H1 (cell line): ENCODE measurements at regions of chr14 and their contacts with region 1.

Region 1: GRCh38 chr14:39034481-39035296 is 68.3 kb downstream of the SEC23A start:
- DNase-seq: no peak
- H3K4me3 ChIP-seq: no peak overlapping the region
- H3K27ac ChIP-seq: no peak overlapping the region
- H3K4me1 ChIP-seq: no peaks in the 10 kb centered on the region
- H3K27me3 ChIP-seq: peaks cover 0 to 1% (median 0%) of the 10 kb centered on the region in 4 experiments; a peak in 1 of 7 replicates
- CTCF ChIP-seq: peak; percentile 21 to 46 (median 42)
- EP300 ChIP-seq: no peak
- POLR2A ChIP-seq: no peak
- RAD21 ChIP-seq: peak; percentile 57 to 65

Region 2: GRCh38 chr14:39023939-39024871 is 10.5 kb before region 1 on chr14:
- CTCF ChIA-PET with region 1: interaction called, 13 read pairs
- POLR2A ChIA-PET with region 1: no interaction called
- DNase-seq: no peak
- H3K4me3 ChIP-seq: no peak overlapping the region
- H3K27ac ChIP-seq: no peak overlapping the region
- H3K4me1 ChIP-seq: no peaks in the 10 kb centered on the region
- H3K27me3 ChIP-seq: no peaks in the 10 kb centered on the region
- CTCF ChIP-seq: no peak
- EP300 ChIP-seq: no peak
- POLR2A ChIP-seq: no peak
- RAD21 ChIP-seq: no peak